ENCODE measurements at regions of chr11 and their contacts with region 1.

Region 1: GRCh38 chr11:83285771-83286528 is at the start of gene CCDC90B:
- ATAC-seq: peak; percentile 89 to 94 (median 94)
- H3K4me3 ChIP-seq: peak within 1 kb of the TSS; percentile 84 to 96 (median 94)
- H3K27ac ChIP-seq: peak within 1 kb of the TSS; percentile 96 to 98
- H3K4me1 ChIP-seq: peaks cover 23 to 30% of the 10 kb centered on the region in 2 donors
- total RNA-seq, gene CCDC90B: 58.2 to 144 (median 94.8) TPM

Region 2: DNA sequence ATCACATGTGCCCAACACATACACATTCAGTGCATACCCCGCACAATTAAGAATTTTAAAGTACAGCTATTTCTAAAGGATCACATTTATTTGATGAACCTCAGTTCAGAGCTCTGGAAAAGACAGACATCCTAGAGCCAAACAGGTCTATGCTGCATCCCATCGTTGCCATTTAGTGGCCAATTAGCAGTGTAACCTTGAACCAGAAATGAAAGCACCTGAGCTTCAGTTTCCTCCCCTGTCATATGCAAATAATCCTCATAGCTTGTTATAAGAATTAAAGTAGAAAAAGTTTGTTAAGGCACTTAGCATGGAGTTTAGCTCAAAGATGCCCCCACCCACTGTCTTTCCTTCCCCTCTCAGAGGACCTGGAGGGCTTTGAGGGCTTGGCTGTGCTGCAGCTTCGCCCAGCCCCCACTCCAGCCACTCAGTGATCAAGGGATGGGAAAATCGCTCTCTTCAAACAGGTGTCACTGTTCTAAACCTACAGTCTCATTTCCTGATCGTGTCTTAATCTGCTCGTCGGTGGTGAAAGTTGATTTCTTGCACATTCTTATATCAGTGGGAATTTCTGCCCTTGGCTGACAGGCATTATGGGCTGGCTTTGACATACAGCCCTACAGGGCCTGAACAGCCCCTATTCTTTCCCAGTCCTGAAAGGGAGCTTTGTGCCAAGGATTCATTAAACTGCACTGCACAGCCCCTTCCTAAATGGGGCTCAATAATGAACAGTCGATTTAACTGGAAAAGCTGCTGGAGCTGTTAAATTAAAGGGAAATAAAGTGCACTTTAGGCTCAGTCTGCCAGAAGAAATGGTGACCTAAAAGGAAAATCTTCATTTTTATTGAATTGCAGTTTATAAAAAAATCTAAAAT is 528.9 kb before region 1 on chr11:
- in situ Hi-C with region 1: no loop called
- ATAC-seq: peak in 5 of 8 experiments; percentile 87 to 94 (median 91)
- H3K4me3 ChIP-seq: no peak overlapping the region
- H3K27ac ChIP-seq: peak overlapping the region in 1 of 2 donors; percentile 26
- H3K4me1 ChIP-seq: peaks cover 20 to 21% of the 10 kb centered on the region in 2 donors

Region 3: DNA sequence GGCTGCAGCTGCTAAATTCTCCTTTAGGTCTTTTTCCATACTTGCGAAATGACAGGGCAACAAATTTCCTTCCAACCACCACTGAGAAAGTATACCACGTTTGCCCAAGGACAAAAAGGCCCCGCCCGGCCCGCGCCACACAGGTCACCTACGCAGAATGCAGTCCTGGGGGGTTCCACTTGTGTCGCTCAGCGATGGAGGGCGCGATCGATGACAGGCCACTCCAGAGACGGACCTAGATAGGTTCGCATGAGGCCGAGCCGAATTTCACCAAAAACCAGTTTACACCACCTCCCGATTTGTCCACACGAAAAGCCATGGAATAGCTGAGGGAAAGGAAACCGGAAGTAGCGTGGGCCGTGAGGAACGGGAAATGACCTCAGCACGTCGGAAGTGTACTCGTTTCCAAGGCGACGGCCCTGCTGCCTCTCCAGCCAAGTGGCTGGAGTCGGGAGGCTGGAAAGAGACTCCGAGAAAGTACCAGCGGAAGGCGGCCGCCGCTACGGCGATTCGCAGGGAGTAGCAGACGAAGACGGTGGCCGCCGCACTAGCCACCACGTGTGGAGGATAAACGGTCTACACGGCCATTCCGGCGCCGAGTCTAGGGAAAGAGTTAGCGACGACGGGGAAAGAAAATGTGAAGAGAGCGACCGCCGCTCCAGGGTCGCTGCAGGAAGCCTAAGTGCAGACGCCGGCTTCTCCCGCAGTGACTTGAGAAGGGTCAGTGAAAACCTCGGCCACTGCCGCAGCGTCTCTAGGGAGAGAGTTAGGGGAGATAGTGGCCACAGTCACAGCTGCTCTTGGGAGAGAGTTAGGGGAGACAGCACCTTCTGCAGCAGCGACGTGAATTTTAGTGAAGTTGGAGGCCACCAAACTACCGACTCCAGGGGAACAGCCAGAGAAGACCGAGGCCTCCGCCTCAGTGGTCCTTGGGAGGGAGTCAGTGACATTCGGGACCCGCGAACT is 92.4 kb before region 1 on chr11 and contains the start of gene ANKRD42:
- in situ Hi-C with region 1: loop called in 1 of 9 experiments (anchors 25 kb)
- ATAC-seq: peak; percentile 80 to 97 (median 94)
- H3K4me3 ChIP-seq: peak within 1 kb of the TSS; percentile 63 to 95 (median 82)
- H3K27ac ChIP-seq: peak within 1 kb of the TSS; percentile 57 to 80
- H3K4me1 ChIP-seq: peaks cover 3 to 12% of the 10 kb centered on the region in 2 donors
- total RNA-seq, gene ANKRD42: 5.0 to 31.5 (median 9.1) TPM